Right cardiac atrium (tissue), 5 donors: ENCODE measurements at regions of chr6 and their contacts with region 1.

Region 1: DNA sequence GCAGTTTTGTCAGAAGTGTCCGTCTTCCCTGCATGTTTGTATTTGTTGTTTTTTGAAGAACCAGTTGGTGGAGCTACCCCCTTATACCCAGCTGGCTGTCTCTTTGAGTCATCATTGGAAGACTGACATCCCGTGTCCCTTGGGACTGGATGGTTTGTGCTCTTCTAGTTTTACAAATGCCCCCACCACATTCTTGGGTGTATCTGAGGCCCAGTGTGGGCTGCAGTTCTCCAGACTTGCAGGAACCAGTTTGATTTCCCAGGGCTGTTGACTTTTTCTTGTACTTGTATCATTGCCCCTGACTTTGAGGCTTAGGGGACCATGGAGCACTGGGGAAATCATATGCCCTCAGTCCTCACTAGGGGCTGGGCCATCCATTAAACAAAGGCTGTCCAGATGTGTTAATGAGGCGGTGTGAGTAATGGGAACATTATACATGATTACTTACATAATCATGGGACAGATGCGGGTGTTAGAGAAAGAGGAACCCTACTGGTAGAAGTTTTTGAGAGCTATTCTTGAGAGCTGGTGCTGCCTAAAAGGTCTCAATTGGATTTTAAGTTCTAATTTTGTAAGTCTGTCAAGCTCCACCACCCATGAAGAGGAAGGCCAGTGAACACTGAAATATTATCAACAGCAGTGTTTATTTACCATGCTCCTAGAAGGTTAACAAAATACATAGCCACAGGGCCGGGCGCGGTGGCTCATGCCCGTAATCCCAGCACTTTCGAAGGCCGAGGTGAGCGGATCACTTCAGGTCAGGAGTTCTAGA is 8.4 kb downstream of the JARID2 start:
- DNase-seq: no peak
- ATAC-seq: no peak
- H3K4me3 ChIP-seq: no peak overlapping the region
- H3K27ac ChIP-seq: no peak overlapping the region
- H3K4me1 ChIP-seq: peaks cover 10% of the 10 kb centered on the region
- H3K27me3 ChIP-seq: no peaks in the 10 kb centered on the region

Region 2: GRCh38 chr6:15152700-15153099 is 101.6 kb before region 1 on chr6:
- intact Hi-C with region 1: no loop called
- DNase-seq: no peak
- ATAC-seq: no peak
- H3K4me3 ChIP-seq: no peak overlapping the region
- H3K27ac ChIP-seq: no peak overlapping the region
- H3K4me1 ChIP-seq: no peaks in the 10 kb centered on the region
- H3K27me3 ChIP-seq: no peaks in the 10 kb centered on the region

Region 3: DNA sequence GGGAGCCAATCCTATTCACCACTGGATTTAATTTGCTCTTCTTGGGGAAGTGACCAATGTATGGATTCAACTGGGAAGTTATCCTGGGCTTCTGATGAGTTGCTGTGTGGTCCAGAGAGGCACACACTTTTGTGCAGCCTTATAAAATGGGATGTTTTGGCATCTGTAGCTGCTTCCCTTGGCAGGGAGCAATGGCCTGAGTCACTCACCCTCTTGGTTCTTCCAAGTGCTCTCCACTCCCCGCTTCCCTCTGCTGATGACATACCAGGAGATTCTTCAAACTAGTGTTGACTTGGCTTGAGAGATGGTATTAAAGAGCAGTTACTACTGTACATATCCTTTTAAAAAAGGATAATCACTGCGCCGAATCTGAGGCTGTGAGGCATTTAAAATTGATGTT is 97.4 kb after region 1 on chr6:
- intact Hi-C with region 1: loop called in 1 of 4 experiments (anchors 10 kb)
- DNase-seq: peak; percentile 63 to 70 (median 65)
- ATAC-seq: peak; percentile 96
- H3K4me3 ChIP-seq: no peak overlapping the region
- H3K27ac ChIP-seq: no peak overlapping the region
- H3K4me1 ChIP-seq: peaks cover 3% of the 10 kb centered on the region
- H3K27me3 ChIP-seq: no peaks in the 10 kb centered on the region

Region 4: GRCh38 chr6:15365273-15365687 is 111.0 kb after region 1 on chr6:
- intact Hi-C with region 1: loop called in 1 of 4 experiments (anchors 10 kb)
- DNase-seq: peak; percentile 89 to 94 (median 90)
- ATAC-seq: peak; percentile 89 to 92
- H3K4me3 ChIP-seq: no peak overlapping the region
- H3K27ac ChIP-seq: no peak overlapping the region
- H3K4me1 ChIP-seq: peaks cover 13% of the 10 kb centered on the region
- H3K27me3 ChIP-seq: no peaks in the 10 kb centered on the region

Region 5: GRCh38 chr6:15429141-15430110 is 175.2 kb after region 1 on chr6:
- intact Hi-C with region 1: loop called in 1 of 4 experiments (anchors 10 kb)
- DNase-seq: no peak
- ATAC-seq: peak in 1 of 2 donors; percentile 40
- H3K4me3 ChIP-seq: no peak overlapping the region
- H3K27ac ChIP-seq: no peak overlapping the region
- H3K4me1 ChIP-seq: peaks cover 25% of the 10 kb centered on the region
- H3K27me3 ChIP-seq: no peaks in the 10 kb centered on the region

Region 6: DNA sequence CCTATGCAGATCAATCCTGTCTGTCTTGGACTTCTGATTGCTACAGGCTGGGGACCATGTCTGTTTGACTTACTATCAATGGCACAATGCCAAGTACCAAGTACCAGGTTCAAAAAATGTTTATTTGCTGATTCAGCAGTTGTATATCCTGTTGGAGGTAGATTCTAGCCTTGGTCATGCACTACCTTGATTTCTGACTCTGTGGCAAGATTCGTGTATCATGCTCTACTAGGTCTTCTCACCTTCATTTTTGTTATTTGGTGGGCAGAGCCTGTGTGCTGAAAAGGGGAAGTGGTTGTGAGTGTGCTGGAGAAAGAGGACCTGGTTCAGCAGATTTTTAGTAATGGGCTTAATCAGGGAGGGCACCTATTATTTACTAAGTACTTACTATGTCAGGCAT is 682.2 kb after region 1 on chr6:
- intact Hi-C with region 1: no loop called
- DNase-seq: no peak
- ATAC-seq: no peak
- H3K4me3 ChIP-seq: no peak overlapping the region
- H3K27ac ChIP-seq: no peak overlapping the region
- H3K4me1 ChIP-seq: no peaks in the 10 kb centered on the region
- H3K27me3 ChIP-seq: no peaks in the 10 kb centered on the region